MCF 10A (cell line): ENCODE measurements at regions of chr4 and their contacts with region 1.

Region 1: DNA sequence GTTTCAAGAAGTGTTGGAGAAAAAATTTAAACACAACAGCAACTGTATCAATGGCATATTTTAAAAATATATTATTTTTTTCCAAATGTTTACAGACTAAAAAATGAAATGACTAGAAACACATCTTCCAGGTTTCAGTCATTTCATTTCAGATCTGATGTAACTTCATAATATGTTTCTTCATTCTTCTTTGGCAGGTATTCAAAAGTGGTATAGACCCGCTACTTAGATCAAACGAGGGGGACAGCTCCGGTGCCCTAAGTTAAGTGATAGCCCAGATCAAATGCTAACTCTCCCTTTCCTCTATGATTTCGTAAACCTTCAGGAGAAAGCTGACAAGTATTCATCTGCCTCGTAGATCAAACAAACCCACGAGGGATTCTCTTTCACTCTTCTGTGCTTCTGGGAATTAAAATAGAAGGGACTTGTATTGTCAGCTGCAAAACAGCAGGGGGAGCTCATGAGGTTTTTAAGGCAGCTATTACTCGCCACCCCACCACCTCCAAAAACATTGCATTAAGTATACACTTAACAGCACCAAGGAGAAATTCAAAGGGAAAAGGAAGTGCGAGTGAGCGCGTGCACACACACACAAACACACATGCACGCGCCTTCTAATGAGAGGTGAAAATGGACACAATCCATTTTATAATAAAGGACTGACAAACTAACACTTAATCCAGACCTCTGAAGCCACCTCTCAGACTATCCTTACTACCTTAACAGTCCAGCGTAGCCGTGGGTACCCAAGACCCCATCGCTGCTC is 21.4 kb downstream of the HELT start:
- DNase-seq: peak; percentile 85
- H3K4me3 Mint-ChIP-seq: peak overlapping the region; percentile 67
- H3K27ac Mint-ChIP-seq: peak overlapping the region; percentile 65
- H3K4me1 Mint-ChIP-seq: peaks cover 8% of the 10 kb centered on the region
- H3K27me3 Mint-ChIP-seq: no peaks in the 10 kb centered on the region
- CTCF ChIP-seq: peak; percentile 73

Region 2: DNA sequence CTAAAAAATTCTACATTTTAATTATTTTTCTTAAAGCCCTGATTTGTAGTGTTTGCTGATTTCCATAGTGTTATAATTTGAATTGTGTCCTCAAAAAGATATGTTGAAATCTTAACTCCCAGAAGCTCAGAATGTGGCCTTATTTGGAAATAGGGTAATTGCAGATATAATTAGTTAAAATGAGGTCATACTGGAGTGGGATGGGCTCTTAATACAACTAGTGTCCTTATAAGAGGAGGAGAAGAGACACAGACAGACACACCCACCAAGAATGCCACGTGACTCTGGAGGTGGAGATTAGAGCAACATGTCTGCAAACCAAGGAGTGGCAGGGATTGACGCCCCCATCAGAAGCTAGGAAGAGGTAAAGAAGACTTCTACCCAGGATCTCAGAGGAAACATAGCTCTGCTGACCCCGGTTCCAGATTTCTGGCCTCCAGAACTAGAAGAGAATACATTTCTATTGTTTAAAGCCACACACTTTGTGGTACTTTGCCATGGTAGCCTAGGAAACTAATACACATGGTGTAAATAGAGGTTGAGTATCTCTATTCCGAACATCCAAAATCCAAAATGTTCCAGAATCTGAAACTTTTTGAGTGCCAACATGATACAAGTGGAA is 494.8 kb before region 1 on chr4:
- CTCF ChIA-PET with region 1: no interaction called
- POLR2A ChIA-PET with region 1: no interaction called
- intact Hi-C with region 1: no loop called
- DNase-seq: peak; percentile 6
- H3K4me3 Mint-ChIP-seq: no peak overlapping the region
- H3K27ac Mint-ChIP-seq: no peak overlapping the region
- H3K4me1 Mint-ChIP-seq: no peaks in the 10 kb centered on the region
- H3K27me3 Mint-ChIP-seq: no peaks in the 10 kb centered on the region
- CTCF ChIP-seq: no peak

Region 3: DNA sequence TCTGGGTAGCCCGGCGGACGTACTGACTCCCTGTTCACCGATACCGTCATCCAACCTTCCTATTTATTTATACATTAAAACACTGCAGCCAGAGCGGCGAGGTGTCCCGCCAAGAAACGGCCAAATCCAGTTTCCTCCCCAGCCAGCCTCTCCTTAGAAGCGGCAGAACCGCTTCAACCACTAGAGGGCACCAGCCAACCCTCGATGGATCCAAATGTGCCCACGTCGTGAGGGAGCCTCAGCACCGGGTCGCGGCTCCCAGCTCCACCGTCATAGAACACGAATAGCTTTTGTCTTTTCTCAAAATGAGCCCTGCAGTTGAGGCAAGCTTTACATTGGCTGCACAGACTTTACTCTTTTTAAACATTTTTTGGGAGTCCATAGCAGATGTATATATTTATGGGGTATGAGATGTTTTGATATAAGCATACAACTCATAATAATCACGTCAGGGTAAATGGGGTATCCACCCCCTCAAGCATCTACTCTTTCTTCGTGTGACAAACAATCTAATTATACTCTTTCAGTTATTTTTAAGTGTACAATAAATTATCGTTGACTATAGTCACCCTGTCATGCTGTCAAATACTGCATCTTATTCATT is 34.4 kb before region 1 on chr4:
- CTCF ChIA-PET with region 1: interaction called, 4 read pairs
- POLR2A ChIA-PET with region 1: no interaction called
- intact Hi-C with region 1: loop called (anchors 1 kb)
- DNase-seq: peak; percentile 88
- H3K4me3 Mint-ChIP-seq: peak overlapping the region; percentile 26
- H3K27ac Mint-ChIP-seq: no peak overlapping the region
- H3K4me1 Mint-ChIP-seq: peaks cover 8% of the 10 kb centered on the region
- H3K27me3 Mint-ChIP-seq: peaks cover 29% of the 10 kb centered on the region
- CTCF ChIP-seq: peak; percentile 93

Region 4: GRCh38 chr4:185054876-185055275 is 15.2 kb after region 1 on chr4:
- CTCF ChIA-PET with region 1: interaction called, 26 read pairs
- POLR2A ChIA-PET with region 1: no interaction called
- intact Hi-C with region 1: no loop called
- DNase-seq: no peak
- H3K4me3 Mint-ChIP-seq: no peak overlapping the region
- H3K27ac Mint-ChIP-seq: no peak overlapping the region
- H3K4me1 Mint-ChIP-seq: no peaks in the 10 kb centered on the region
- H3K27me3 Mint-ChIP-seq: peaks cover 5% of the 10 kb centered on the region
- CTCF ChIP-seq: no peak

Region 5: DNA sequence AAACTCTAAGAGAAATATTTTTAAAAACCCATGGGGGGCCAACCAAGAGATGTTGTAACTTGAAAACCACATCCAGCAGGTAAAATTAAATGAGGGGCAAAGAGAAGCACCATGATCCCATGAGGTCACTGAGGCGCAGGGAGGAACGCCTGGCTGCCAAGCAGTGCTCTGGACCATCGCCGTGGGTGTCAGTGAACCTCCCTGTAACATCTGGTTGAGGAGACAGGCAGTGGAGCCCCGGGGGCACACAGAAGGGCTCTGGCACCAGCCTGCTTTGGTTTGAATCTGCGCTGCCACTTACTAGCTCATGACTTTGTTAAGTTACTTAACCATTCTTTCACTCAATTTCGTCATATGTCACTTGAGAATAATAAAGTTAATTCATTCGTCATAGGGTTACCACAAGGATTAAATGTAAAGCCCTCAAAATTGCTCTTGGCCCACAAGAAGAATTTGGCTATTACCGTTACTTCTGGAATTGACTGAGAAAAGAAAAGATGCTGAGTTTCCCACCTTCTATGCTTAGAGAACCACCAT is 61.7 kb after region 1 on chr4:
- CTCF ChIA-PET with region 1: interaction called, 89 read pairs
- POLR2A ChIA-PET with region 1: interaction called, 4 read pairs
- intact Hi-C with region 1: loop called (anchors 1 kb)
- DNase-seq: no peak
- H3K4me3 Mint-ChIP-seq: no peak overlapping the region
- H3K27ac Mint-ChIP-seq: no peak overlapping the region
- H3K4me1 Mint-ChIP-seq: no peaks in the 10 kb centered on the region
- H3K27me3 Mint-ChIP-seq: no peaks in the 10 kb centered on the region
- CTCF ChIP-seq: no peak

Region 6: GRCh38 chr4:185304944-185305690 is 265.4 kb after region 1 on chr4:
- CTCF ChIA-PET with region 1: no interaction called
- POLR2A ChIA-PET with region 1: no interaction called
- intact Hi-C with region 1: loop called (anchors 5 kb)
- DNase-seq: peak; percentile 13
- H3K4me3 Mint-ChIP-seq: no peak overlapping the region
- H3K27ac Mint-ChIP-seq: peak overlapping the region; percentile 66
- H3K4me1 Mint-ChIP-seq: peaks cover 30% of the 10 kb centered on the region
- H3K27me3 Mint-ChIP-seq: no peaks in the 10 kb centered on the region
- CTCF ChIP-seq: peak; percentile 34

Region 7: GRCh38 chr4:186554539-186554913 is 1514.8 kb after region 1 on chr4:
- CTCF ChIA-PET with region 1: no interaction called
- POLR2A ChIA-PET with region 1: no interaction called
- intact Hi-C with region 1: no loop called
- DNase-seq: peak; percentile 53
- H3K4me3 Mint-ChIP-seq: peak overlapping the region; percentile 68
- H3K27ac Mint-ChIP-seq: no peak overlapping the region
- H3K4me1 Mint-ChIP-seq: peaks cover 7% of the 10 kb centered on the region
- H3K27me3 Mint-ChIP-seq: peaks cover 12% of the 10 kb centered on the region
- CTCF ChIP-seq: peak; percentile 13